Psoas muscle (tissue), 8 donors: ENCODE measurements at regions of chr11 and their contacts with region 1.

Region 1: DNA sequence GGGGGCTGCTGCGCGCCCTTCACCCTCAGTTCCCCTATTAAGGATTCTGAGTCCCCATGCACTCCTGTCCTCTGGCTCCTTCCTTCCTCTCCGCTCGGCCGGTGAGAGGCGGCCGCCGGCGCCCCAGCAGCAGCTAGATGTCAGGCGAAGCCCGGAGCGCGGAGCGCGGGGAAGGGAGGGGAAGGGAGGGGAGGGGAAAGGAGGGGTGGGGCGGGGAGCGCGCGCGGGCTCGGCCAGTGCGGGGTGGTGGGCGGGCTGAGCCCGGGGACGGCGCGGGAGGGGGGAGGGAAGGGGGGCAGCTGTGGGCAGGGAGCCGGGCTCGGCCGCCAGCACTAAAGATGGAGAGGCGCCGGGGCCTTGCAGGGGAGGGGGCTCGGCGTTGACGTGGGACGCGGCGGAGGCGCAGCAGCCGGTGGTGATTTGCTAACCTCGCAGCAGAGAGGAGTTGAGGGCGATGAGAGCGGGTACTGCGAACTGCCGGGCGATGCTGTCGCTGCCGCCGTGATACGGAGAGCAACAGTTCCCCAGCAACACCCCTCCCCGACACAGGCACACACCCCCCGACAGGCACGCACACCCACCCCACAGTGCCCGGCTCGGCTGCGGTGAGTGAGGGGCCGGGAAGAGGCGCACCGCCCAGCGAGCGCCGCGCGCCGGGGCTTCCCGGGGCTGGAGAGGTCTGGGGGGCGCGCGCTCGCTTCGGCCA is at the start of gene ZBTB16:
- DNase-seq: peak; percentile 90 to 97
- ATAC-seq: peak; percentile 52 to 66 (median 59)
- H3K4me3 ChIP-seq: peak within 1 kb of the TSS; percentile 97
- H3K27ac ChIP-seq: peak within 1 kb of the TSS; percentile 99
- H3K4me1 ChIP-seq: peaks cover 55% of the 10 kb centered on the region
- H3K27me3 ChIP-seq: no peaks in the 10 kb centered on the region
- CTCF ChIP-seq: peak; percentile 18
- total RNA-seq, gene ZBTB16: 11.7 to 299 (median 183) TPM

Region 2: DNA sequence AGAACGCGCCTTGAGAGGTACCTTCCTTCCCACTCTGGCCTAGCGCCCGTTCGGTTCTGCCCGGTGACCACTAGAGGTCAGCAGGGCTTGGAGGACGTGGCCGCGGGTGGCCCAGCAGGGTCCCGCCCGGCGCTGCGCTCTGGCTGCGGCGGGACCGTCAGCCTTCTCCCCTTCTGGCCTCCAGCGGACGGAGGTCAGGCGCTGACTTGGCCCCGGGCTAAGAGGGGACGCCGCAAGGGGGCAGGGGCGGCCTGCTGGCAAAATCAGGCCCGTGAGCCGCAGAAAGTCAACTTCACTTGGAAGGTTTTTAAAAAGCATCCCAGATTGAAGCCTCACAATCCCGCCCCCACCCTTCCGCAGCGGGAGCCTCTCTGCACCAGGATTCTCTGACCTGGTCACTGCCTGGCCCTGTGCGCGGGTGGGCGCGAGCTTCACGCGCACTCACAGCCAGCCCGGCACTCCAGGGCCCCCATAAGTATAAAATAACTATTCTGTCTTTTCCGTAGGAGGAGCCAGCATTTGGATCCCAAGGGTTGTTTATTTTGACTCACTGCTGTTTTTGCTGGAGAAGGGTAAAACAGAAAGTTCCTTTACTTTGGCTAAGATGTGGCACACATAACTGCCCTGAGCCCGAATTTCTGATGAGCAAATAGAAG is 23.1 kb before region 1 on chr11:
- intact Hi-C with region 1: loop called in 1 of 2 experiments (anchors 2 kb)
- DNase-seq: peak; percentile 88 to 94
- ATAC-seq: peak; percentile 85 to 93 (median 88)
- H3K4me3 ChIP-seq: peak overlapping the region; percentile 66
- H3K27ac ChIP-seq: peak overlapping the region; percentile 75
- H3K4me1 ChIP-seq: peaks cover 40% of the 10 kb centered on the region
- H3K27me3 ChIP-seq: no peaks in the 10 kb centered on the region
- CTCF ChIP-seq: peak; percentile 87

Region 3: GRCh38 chr11:114099392-114100178 is 40.2 kb after region 1 on chr11:
- intact Hi-C with region 1: loop called in 1 of 2 experiments (anchors 2 kb)
- DNase-seq: peak in 1 of 2 donors; percentile 63
- ATAC-seq: peak; percentile 75 to 89 (median 84)
- H3K4me3 ChIP-seq: peak overlapping the region; percentile 45
- H3K27ac ChIP-seq: peak overlapping the region; percentile 99
- H3K4me1 ChIP-seq: peaks cover 94% of the 10 kb centered on the region
- H3K27me3 ChIP-seq: no peaks in the 10 kb centered on the region
- CTCF ChIP-seq: no peak

Region 4: DNA sequence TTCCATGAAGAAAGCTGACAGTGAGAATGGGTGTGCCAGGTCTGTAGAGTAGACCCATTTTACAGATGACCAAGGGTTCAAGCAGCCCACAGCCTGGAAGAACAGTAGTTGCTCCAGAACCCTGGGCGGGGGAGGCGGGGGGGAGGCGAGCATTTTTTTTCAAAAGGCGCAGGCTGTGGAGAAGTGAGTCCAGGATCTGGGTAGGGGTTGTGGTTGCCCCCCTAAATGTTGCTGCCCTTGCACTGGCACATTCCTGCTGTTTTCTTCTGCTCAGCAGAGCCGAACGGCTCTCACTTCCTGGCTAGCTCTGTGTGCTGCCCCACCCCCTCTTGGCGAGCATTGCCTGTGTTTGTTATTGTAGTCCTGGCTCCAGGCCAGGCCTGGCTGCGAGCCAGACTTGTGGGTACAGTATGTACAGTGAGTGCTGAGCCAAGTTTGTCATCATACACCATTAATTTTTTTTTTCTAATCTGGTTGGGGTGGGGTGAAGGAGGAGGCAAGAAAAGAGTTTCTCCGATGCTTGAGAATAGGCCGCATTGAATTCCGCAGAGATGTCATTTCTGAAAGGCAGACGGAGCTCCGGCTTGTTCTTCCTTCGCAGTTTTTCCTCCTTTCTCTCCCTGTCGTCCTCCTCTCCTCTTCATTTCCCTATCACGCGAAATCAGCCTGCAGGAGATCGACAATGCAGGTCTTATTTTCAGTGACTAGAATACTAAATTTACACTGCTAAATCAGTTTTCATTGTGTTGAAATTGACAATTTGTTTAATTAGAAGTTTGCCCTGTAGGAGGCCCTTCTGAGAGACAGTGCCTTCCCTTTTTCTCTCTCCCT is 100.6 kb after region 1 on chr11:
- intact Hi-C with region 1: loop called in 1 of 2 experiments (anchors 1 kb)
- DNase-seq: peak; percentile 99 to 100
- ATAC-seq: peak; percentile 32 to 45 (median 44)
- H3K4me3 ChIP-seq: peak overlapping the region; percentile 51
- H3K27ac ChIP-seq: peak overlapping the region; percentile 99
- H3K4me1 ChIP-seq: peaks cover 91% of the 10 kb centered on the region
- H3K27me3 ChIP-seq: no peaks in the 10 kb centered on the region
- CTCF ChIP-seq: peak; percentile 13

Region 5: DNA sequence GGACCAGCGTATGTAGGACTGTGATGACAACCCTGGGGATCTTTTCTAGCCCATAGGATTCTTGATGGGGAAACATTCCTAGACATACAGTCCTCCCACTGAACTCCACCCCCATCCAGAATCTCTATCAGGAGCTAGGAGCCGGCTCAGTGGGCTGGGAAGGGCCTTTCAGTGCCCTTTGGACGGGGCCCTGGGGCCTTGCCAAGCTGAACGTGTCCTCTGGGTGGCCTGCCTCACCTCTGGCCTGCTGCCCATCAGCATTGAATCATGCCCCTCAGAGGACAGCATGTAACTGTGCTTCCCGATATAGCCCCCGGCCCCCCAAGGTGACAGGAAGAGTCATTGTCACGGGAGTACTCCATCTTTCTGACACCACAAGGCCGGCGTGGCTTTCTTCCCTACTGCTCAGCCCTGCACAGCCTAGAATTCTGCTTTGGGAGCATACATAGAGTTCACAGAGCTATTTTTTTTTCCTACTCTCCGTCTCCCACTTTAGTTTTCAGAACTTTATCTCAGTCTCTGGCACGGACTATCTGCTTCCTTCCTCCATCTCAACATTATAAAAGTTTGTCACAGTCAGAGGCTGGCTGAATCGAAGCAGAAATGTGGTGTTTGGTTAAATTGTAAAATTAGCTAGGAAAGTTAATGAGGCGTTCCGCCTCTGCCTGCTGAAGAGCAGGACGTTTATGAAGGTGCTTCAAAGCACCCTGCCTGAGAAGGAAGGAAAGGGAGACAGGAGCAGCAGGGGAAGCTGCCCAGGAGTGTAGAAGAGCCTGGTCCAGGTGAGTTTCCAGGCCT is 112.0 kb after region 1 on chr11:
- intact Hi-C with region 1: loop called (anchors 2 to 5 kb)
- DNase-seq: peak; percentile 98 to 99
- ATAC-seq: peak; percentile 39 to 78 (median 67)
- H3K4me3 ChIP-seq: peak overlapping the region; percentile 42
- H3K27ac ChIP-seq: peak overlapping the region; percentile 99
- H3K4me1 ChIP-seq: peaks cover 98% of the 10 kb centered on the region
- H3K27me3 ChIP-seq: no peaks in the 10 kb centered on the region
- CTCF ChIP-seq: no peak

Region 6: GRCh38 chr11:114197799-114198500 is 138.5 kb after region 1 on chr11:
- intact Hi-C with region 1: loop called in 1 of 2 experiments (anchors 5 kb)
- DNase-seq: peak; percentile 80 to 92
- ATAC-seq: peak; percentile 68 to 85 (median 80)
- H3K4me3 ChIP-seq: peak overlapping the region; percentile 23
- H3K27ac ChIP-seq: peak overlapping the region; percentile 91
- H3K4me1 ChIP-seq: peaks cover 96% of the 10 kb centered on the region
- H3K27me3 ChIP-seq: no peaks in the 10 kb centered on the region
- CTCF ChIP-seq: no peak

Region 7: GRCh38 chr11:114257621-114258558 is 198.5 kb after region 1 on chr11:
- intact Hi-C with region 1: loop called in 1 of 2 experiments (anchors 5 kb)
- DNase-seq: peak; percentile 69 to 87
- ATAC-seq: peak; percentile 48 to 58 (median 52)
- H3K4me3 ChIP-seq: peak overlapping the region; percentile 29
- H3K27ac ChIP-seq: peak overlapping the region; percentile 89
- H3K4me1 ChIP-seq: peaks cover 66% of the 10 kb centered on the region
- H3K27me3 ChIP-seq: no peaks in the 10 kb centered on the region
- CTCF ChIP-seq: peak; percentile 30